ENCODE measurements at regions of chr10 and their contacts with region 1.

Region 1: GRCh38 chr10:132299371-132300336 is 8.1 kb downstream of the STK32C start:
- DNase-seq: peak in 3 of 7 donors; percentile 3 to 10 (median 4)
- H3K4me3 ChIP-seq: no peak overlapping the region
- H3K27ac ChIP-seq: no peak overlapping the region
- H3K4me1 ChIP-seq: peaks cover 0 to 6% of the 10 kb centered on the region in 2 donors
- H3K27me3 ChIP-seq: no peaks in the 10 kb centered on the region
- CTCF ChIP-seq: no peak
- POLR2A ChIP-seq: no peak

Region 2: GRCh38 chr10:132354356-132355094 is 54.9 kb after region 1 on chr10:
- intact Hi-C with region 1: loop called in 1 of 2 experiments (anchors 5 kb)
- DNase-seq: peak in 1 of 7 donors; percentile 8
- H3K4me3 ChIP-seq: no peak overlapping the region
- H3K27ac ChIP-seq: no peak overlapping the region
- H3K4me1 ChIP-seq: no peaks in the 10 kb centered on the region
- H3K27me3 ChIP-seq: no peaks in the 10 kb centered on the region
- CTCF ChIP-seq: no peak
- POLR2A ChIP-seq: no peak